ENCODE measurements at regions of chr1 and their contacts with region 1.

Region 1: GRCh38 chr1:185325413-185325812 is 8.4 kb upstream of the IVNS1ABP start:
- DNase-seq: no peak
- ATAC-seq: no peak
- H3K4me3 ChIP-seq: no peak overlapping the region
- H3K27ac ChIP-seq: no peak overlapping the region
- H3K4me1 ChIP-seq: no peaks in the 10 kb centered on the region
- H3K27me3 ChIP-seq: no peaks in the 10 kb centered on the region
- CTCF ChIP-seq: no peak
- POLR2A ChIP-seq: no peak

Region 2: GRCh38 chr1:185281245-185281644 is 44.2 kb before region 1 on chr1:
- intact Hi-C with region 1: no loop called
- DNase-seq: no peak
- ATAC-seq: no peak
- H3K4me3 ChIP-seq: no peak overlapping the region
- H3K27ac ChIP-seq: peak overlapping the region in 1 of 12 donors; percentile 8
- H3K4me1 ChIP-seq: peaks cover 0 to 10% (median 0%) of the 10 kb centered on the region in 12 donors
- H3K27me3 ChIP-seq: no peaks in the 10 kb centered on the region
- CTCF ChIP-seq: no peak
- POLR2A ChIP-seq: no peak

Region 3: DNA sequence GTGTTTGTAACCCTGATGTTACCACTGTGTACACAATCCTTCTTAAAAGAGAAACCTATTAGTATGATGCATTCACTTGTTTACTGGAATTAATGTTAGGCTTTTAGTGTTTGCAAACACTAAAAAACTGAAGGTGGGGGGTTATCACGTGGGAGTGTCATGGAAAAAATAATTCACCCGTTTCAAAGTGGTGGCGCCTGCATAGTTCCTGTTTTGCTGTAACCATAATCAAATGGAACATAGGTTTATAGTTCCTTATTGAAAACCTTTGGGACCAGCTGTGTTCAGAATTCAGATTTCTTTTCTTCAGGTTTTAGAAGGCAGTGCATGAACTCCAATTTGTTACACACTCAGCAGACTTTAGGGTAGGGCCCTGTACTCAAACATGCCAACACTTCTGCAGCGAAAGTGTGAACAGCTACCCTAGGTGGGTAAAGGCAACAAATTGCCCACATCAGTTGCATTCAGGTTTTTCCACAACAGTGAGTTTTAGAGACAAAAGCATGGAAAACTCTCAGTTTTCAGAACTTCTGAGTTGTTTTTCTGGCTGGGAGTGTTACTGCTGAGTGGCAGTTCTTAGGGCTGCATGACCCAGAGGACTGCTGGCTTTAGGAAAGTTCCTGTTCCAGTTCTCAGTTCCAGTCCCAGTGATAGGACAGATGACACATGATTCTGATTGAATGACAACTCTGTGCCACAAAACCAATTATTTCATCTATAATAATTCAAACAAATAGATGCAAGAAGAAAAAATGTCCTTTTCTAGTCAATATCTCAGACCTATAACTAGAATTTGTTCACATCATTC is 20.7 kb after region 1 on chr1:
- intact Hi-C with region 1: no loop called
- DNase-seq: no peak
- ATAC-seq: peak in 3 of 4 donors; percentile 55 to 67 (median 62)
- H3K4me3 ChIP-seq: no peak overlapping the region
- H3K27ac ChIP-seq: peak overlapping the region in 4 of 12 donors; percentile 6 to 84 (median 35)
- H3K4me1 ChIP-seq: peaks cover 0 to 17% (median 0%) of the 10 kb centered on the region in 12 donors
- H3K27me3 ChIP-seq: no peaks in the 10 kb centered on the region
- CTCF ChIP-seq: no peak
- POLR2A ChIP-seq: no peak

Region 4: GRCh38 chr1:185398599-185398998 is 73.2 kb after region 1 on chr1:
- intact Hi-C with region 1: loop called in 1 of 10 experiments (anchors 5 kb)
- DNase-seq: no peak
- ATAC-seq: no peak
- H3K4me3 ChIP-seq: no peak overlapping the region
- H3K27ac ChIP-seq: no peak overlapping the region
- H3K4me1 ChIP-seq: peaks cover 0 to 5% (median 0%) of the 10 kb centered on the region in 12 donors
- H3K27me3 ChIP-seq: no peaks in the 10 kb centered on the region
- CTCF ChIP-seq: no peak
- POLR2A ChIP-seq: no peak

Region 5: GRCh38 chr1:185934476-185935189 is 609.2 kb after region 1 on chr1:
- intact Hi-C with region 1: no loop called
- DNase-seq: no peak
- ATAC-seq: no peak
- H3K4me3 ChIP-seq: no peak overlapping the region
- H3K27ac ChIP-seq: no peak overlapping the region
- H3K4me1 ChIP-seq: peaks cover 0 to 17% (median 0%) of the 10 kb centered on the region in 12 donors
- H3K27me3 ChIP-seq: no peaks in the 10 kb centered on the region
- CTCF ChIP-seq: no peak
- POLR2A ChIP-seq: no peak